Activated CD4-positive, alpha-beta memory T cell treated with anti-CD3 and anti-CD28 coated beads, Interleukin-2, amount 10 ng/mL, durations not matched to agents 7 days and 5 days (primary cell): ENCODE measurements at regions of chr3 and their contacts with region 1.

Region 1: GRCh38 chr3:71444028-71444860 is 139.3 kb downstream of the FOXP1 start:
- DNase-seq: peak; percentile 79
- H3K4me3 Mint-ChIP-seq: peak overlapping the region; percentile 42
- H3K27ac Mint-ChIP-seq: peak overlapping the region; percentile 99
- H3K4me1 Mint-ChIP-seq: peaks cover 88% of the 10 kb centered on the region
- H3K27me3 Mint-ChIP-seq: no peaks in the 10 kb centered on the region

Region 2: GRCh38 chr3:71425491-71426071 is 18.7 kb before region 1 on chr3:
- CTCF ChIA-PET with region 1: no interaction called
- POLR2A ChIA-PET with region 1: interaction called, 12 read pairs
- DNase-seq: no peak
- H3K4me3 Mint-ChIP-seq: no peak overlapping the region
- H3K27ac Mint-ChIP-seq: no peak overlapping the region
- H3K4me1 Mint-ChIP-seq: peaks cover 41% of the 10 kb centered on the region
- H3K27me3 Mint-ChIP-seq: peaks cover 8% of the 10 kb centered on the region

Region 3: GRCh38 chr3:71456156-71456555 is 11.9 kb after region 1 on chr3:
- CTCF ChIA-PET with region 1: interaction called, 6 read pairs
- POLR2A ChIA-PET with region 1: interaction called, 30 read pairs
- DNase-seq: no peak
- H3K4me3 Mint-ChIP-seq: peak overlapping the region; percentile 36
- H3K27ac Mint-ChIP-seq: peak overlapping the region; percentile 62
- H3K4me1 Mint-ChIP-seq: peaks cover 66% of the 10 kb centered on the region
- H3K27me3 Mint-ChIP-seq: no peaks in the 10 kb centered on the region